Esophagus squamous epithelium (tissue), 5 donors: ENCODE measurements at regions of chr22 and their contacts with region 1.

Region 1: DNA sequence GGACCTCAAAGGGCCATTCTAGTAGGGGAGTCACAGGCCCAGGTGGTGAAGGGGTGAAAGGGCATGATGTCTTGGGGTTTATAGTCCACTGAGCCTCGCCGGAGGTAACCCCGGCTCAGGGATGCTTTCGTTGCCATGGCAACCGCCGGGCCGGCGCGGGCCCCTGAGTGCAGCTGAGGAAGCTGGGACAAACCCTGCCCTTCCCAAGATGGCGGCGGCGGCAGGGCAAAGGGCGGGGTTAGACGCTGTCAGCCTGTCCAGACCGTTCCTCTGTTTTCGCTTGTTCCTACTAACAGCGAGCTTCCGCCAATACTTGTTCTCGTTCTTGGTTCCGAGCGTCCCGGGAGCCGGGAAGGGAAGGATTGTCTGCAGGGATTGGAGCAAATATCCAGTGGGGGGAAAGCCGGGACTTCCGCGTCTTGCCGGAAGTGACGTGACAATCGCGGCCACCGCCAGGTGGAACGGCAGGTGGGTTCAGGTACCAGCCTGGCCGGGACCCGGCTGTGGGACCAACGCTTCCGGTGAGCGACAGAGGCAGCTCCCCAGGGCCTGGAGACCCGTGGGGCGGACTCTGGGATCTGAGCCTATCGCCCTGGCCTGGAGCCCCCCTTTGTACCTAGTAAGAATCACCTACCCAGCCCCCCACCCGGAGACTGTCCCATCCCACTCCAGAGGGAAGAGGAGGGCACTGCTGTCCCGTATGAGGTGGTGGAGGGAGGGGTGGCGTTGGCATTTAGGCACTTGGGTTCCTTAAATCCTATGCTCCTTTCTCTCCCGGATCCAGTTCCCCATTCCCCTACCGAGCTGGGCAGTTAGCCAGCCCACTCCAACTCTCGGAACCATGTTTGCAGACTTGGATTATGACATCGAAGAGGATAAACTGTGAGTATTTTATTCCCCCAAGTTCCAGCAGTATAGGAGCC is at the start of gene PICK1:
- DNase-seq: peak; percentile 73
- H3K4me3 ChIP-seq: peak within 1 kb of the TSS; percentile 48 to 72 (median 66)
- H3K27ac ChIP-seq: peak within 1 kb of the TSS; percentile 85 to 92 (median 88)
- H3K4me1 ChIP-seq: peaks cover 0 to 22% (median 13%) of the 10 kb centered on the region in 3 donors
- H3K27me3 ChIP-seq: no peaks in the 10 kb centered on the region
- CTCF ChIP-seq: peak in 4 of 6 experiments; percentile 4 to 42 (median 26)
- POLR2A ChIP-seq: peak in 2 of 4 donors; percentile 26 to 53
- total RNA-seq, gene PICK1: 26.3 to 53.1 (median 31.2) TPM

Region 2: DNA sequence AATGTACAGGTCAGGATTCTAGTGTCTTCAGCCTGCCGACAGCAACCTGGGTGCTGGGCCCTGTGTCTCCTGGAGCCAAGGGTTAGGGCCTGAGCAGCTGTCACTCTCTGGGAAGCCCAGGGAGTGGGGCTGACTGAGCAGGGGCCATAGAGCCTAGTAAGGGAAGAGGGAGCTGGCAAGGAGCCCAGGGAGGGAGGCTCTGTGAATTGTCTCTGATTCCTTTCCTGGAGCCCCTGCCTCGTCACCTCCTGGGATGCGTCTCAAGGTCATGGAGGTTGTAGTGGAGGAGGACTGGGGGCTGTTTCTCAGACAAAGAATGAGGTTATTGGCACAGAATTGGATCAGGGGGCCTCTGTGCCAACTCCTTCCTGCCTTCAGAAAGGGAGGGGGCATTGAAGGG is 84.7 kb before region 1 on chr22:
- intact Hi-C with region 1: no loop called
- DNase-seq: no peak
- H3K4me3 ChIP-seq: no peak overlapping the region
- H3K27ac ChIP-seq: no peak overlapping the region
- H3K4me1 ChIP-seq: peaks cover 0 to 7% (median 0%) of the 10 kb centered on the region in 3 donors
- H3K27me3 ChIP-seq: no peaks in the 10 kb centered on the region
- CTCF ChIP-seq: no peak
- POLR2A ChIP-seq: no peak

Region 3: DNA sequence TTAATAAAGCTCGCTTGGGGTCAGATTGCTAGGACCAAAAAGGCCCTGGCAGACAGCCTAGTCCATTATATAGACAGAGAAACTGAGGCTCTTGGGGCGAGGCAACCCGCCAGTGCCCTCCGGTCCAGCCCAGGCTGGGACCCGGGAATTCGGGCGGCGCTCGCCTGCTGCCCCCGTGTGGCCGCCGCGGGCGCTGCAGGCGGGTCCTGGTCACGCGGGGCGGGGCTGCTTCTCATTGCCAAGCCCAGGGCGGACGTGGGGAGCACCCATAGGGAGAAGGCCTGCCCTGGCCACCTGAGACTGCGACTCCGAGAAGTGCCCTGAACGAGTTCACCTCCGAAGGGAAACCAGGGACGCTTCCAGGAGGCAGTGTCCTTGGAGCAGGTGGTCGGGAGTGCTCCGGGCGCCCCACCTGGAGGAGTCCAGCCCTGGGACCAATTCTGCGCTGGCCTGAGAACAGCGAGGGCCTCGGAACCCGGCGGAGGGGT is 296.0 kb after region 1 on chr22:
- intact Hi-C with region 1: loop called (anchors 5 kb)
- DNase-seq: no peak
- H3K4me3 ChIP-seq: no peak overlapping the region
- H3K27ac ChIP-seq: no peak overlapping the region
- H3K4me1 ChIP-seq: peaks cover 0 to 14% (median 8%) of the 10 kb centered on the region in 3 donors
- H3K27me3 ChIP-seq: no peaks in the 10 kb centered on the region
- CTCF ChIP-seq: peak; percentile 87 to 99 (median 98)
- POLR2A ChIP-seq: no peak